ENCODE measurements at regions of chr2 and their contacts with region 1.

Region 1: DNA sequence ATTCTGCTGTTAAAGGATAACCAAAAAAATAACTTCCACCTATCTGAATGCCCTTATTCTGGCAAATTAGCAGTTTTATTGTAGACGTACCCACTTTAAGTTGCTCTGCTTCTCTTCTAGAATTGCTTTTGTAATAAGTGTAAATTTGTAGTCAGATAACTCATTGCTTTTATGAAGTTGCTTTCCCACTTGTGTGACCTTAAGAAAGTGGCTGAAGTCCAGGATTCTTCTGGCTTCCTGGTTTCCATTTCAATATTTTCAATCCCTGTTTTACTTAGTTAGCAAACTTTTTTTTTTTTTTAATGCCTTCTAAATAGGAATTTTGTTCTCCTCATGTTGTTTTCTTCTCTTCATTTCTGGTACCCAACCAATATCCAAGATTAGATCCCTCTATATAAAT is 59.8 kb downstream of the GLS start:
- DNase-seq: no peak
- ATAC-seq: no peak
- H3K4me3 ChIP-seq: no peak overlapping the region
- H3K4me3 Mint-ChIP-seq: no peak overlapping the region
- H3K27ac ChIP-seq: no peak overlapping the region
- H3K27ac Mint-ChIP-seq: peak overlapping the region in 2 of 9 donors; percentile 20 to 25
- H3K4me1 ChIP-seq: peaks cover 0 to 8% of the 10 kb centered on the region in 2 donors
- H3K4me1 Mint-ChIP-seq: peaks cover 0 to 33% (median 21%) of the 10 kb centered on the region in 7 donors
- H3K27me3 ChIP-seq: no peaks in the 10 kb centered on the region
- H3K27me3 Mint-ChIP-seq: no peaks in the 10 kb centered on the region

Region 2: GRCh38 chr2:189153619-189154018 is 1786.8 kb before region 1 on chr2:
- CTCF ChIA-PET with region 1: no interaction called
- POLR2A ChIA-PET with region 1: no interaction called
- intact Hi-C with region 1: no loop called
- DNase-seq: no peak
- ATAC-seq: no peak
- H3K4me3 ChIP-seq: no peak overlapping the region
- H3K4me3 Mint-ChIP-seq: no peak overlapping the region
- H3K27ac ChIP-seq: no peak overlapping the region
- H3K27ac Mint-ChIP-seq: no peak overlapping the region
- H3K4me1 ChIP-seq: no peaks in the 10 kb centered on the region
- H3K4me1 Mint-ChIP-seq: peaks cover 0 to 1% (median 0%) of the 10 kb centered on the region in 7 donors
- H3K27me3 ChIP-seq: no peaks in the 10 kb centered on the region
- H3K27me3 Mint-ChIP-seq: no peaks in the 10 kb centered on the region

Region 3: DNA sequence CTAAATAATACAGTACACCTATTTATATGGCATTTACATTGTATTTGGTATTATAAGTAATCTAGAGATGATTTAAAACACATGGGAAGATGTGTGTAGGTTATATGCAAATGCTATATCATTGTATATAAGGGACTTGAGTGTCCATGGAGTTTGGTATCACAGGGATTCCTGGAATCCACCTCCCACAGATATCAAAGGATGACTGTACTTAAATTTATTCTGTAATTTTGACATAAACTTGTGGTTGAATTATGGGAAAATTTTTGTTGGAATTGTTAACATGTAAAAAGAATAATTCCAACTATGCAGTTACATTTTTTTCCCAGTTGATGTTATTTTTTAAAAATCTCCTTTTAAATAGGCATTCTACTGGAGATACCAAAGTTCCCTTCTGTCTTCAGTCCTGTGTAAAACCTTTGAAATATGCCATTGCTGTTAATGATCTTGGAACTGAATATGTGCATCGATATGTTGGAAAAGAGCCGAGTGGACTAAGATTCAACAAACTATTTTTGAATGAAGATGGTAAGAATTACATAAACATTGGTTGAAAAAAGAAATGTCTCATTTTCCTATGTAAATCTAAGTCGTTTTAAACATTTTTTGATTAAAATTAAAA is 35.7 kb before region 1 on chr2:
- CTCF ChIA-PET with region 1: no interaction called
- POLR2A ChIA-PET with region 1: no interaction called
- intact Hi-C with region 1: loop called in 1 of 2 experiments (anchors 5 kb)
- DNase-seq: no peak
- ATAC-seq: no peak
- H3K4me3 ChIP-seq: no peak overlapping the region
- H3K4me3 Mint-ChIP-seq: no peak overlapping the region
- H3K27ac ChIP-seq: no peak overlapping the region
- H3K27ac Mint-ChIP-seq: peak overlapping the region in 3 of 9 donors; percentile 59 to 69 (median 61)
- H3K4me1 ChIP-seq: peaks cover 0 to 3% of the 10 kb centered on the region in 2 donors
- H3K4me1 Mint-ChIP-seq: peaks cover 0 to 19% (median 11%) of the 10 kb centered on the region in 7 donors
- H3K27me3 ChIP-seq: no peaks in the 10 kb centered on the region
- H3K27me3 Mint-ChIP-seq: no peaks in the 10 kb centered on the region

Region 4: GRCh38 chr2:190916829-190917228 is 23.6 kb before region 1 on chr2:
- CTCF ChIA-PET with region 1: no interaction called
- POLR2A ChIA-PET with region 1: interaction called, 5 read pairs
- intact Hi-C with region 1: loop called in 1 of 2 experiments (anchors 2 kb)
- DNase-seq: peak in 6 of 9 donors; percentile 22 to 69 (median 42)
- ATAC-seq: peak; percentile 63
- H3K4me3 ChIP-seq: no peak overlapping the region
- H3K4me3 Mint-ChIP-seq: peak overlapping the region in 4 of 10 donors; percentile 19 to 43 (median 28)
- H3K27ac ChIP-seq: no peak overlapping the region
- H3K27ac Mint-ChIP-seq: peak overlapping the region in 4 of 9 donors; percentile 61 to 82 (median 72)
- H3K4me1 ChIP-seq: no peaks in the 10 kb centered on the region
- H3K4me1 Mint-ChIP-seq: peaks cover 18 to 54% (median 44%) of the 10 kb centered on the region in 7 donors
- H3K27me3 ChIP-seq: no peaks in the 10 kb centered on the region
- H3K27me3 Mint-ChIP-seq: no peaks in the 10 kb centered on the region

Measured in naive thymus-derived CD4-positive, alpha-beta T cell (primary cell).